ENCODE measurements at regions of chr4 and their contacts with region 1.

Region 1: DNA sequence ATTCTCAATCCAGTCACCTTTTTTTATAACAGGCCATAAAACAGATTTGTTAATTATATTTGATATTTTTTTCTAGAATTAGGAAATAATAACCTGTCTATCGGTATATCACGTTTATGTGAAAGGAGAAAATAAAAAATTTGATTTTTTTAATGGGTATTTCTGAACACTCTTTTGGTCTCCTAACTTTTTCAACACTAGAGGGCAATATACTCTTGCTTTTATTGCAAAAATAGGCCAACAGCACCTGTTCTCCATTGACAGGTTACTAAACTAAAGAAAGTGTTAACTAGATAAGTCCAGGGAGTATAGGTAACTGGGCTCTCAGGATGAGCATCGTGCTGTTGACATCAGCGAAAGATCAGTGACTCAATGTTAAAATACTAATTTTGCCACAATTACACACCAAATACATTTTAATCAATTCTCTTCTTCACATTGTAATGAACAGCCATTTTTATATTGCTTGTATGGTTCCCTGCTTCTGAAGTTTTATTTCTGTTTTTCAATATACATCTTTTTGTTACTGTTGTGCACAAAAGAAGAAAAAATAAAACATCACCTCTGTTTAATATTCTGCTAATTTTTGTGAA is 22.8 kb downstream of the NDST4 start:
- DNase-seq: no peak
- H3K4me3 Mint-ChIP-seq: no peak overlapping the region
- H3K27ac Mint-ChIP-seq: no peak overlapping the region
- H3K4me1 Mint-ChIP-seq: no peaks in the 10 kb centered on the region
- H3K27me3 Mint-ChIP-seq: no peaks in the 10 kb centered on the region

Region 2: GRCh38 chr4:115076691-115077090 is 13.9 kb before region 1 on chr4:
- CTCF ChIA-PET with region 1: no interaction called
- intact Hi-C with region 1: no loop called
- DNase-seq: no peak
- H3K4me3 Mint-ChIP-seq: no peak overlapping the region
- H3K27ac Mint-ChIP-seq: no peak overlapping the region
- H3K4me1 Mint-ChIP-seq: no peaks in the 10 kb centered on the region
- H3K27me3 Mint-ChIP-seq: peaks cover 2% of the 10 kb centered on the region

Region 3: GRCh38 chr4:115113125-115114106 is 22.8 kb after region 1 on chr4 and contains the start of gene NDST4:
- CTCF ChIA-PET with region 1: no interaction called
- intact Hi-C with region 1: no loop called
- DNase-seq: no peak
- H3K4me3 Mint-ChIP-seq: no peak within 1 kb of the TSS
- H3K27ac Mint-ChIP-seq: no peak within 1 kb of the TSS
- H3K4me1 Mint-ChIP-seq: no peaks in the 10 kb centered on the region
- H3K27me3 Mint-ChIP-seq: no peaks in the 10 kb centered on the region
- total RNA-seq, gene NDST4: not detected

Region 4: GRCh38 chr4:115537387-115537786 is 446.8 kb after region 1 on chr4:
- CTCF ChIA-PET with region 1: interaction called, 7 read pairs
- intact Hi-C with region 1: loop called (anchors 1 kb)
- DNase-seq: no peak
- H3K4me3 Mint-ChIP-seq: no peak overlapping the region
- H3K27ac Mint-ChIP-seq: no peak overlapping the region
- H3K4me1 Mint-ChIP-seq: no peaks in the 10 kb centered on the region
- H3K27me3 Mint-ChIP-seq: no peaks in the 10 kb centered on the region

Region 5: DNA sequence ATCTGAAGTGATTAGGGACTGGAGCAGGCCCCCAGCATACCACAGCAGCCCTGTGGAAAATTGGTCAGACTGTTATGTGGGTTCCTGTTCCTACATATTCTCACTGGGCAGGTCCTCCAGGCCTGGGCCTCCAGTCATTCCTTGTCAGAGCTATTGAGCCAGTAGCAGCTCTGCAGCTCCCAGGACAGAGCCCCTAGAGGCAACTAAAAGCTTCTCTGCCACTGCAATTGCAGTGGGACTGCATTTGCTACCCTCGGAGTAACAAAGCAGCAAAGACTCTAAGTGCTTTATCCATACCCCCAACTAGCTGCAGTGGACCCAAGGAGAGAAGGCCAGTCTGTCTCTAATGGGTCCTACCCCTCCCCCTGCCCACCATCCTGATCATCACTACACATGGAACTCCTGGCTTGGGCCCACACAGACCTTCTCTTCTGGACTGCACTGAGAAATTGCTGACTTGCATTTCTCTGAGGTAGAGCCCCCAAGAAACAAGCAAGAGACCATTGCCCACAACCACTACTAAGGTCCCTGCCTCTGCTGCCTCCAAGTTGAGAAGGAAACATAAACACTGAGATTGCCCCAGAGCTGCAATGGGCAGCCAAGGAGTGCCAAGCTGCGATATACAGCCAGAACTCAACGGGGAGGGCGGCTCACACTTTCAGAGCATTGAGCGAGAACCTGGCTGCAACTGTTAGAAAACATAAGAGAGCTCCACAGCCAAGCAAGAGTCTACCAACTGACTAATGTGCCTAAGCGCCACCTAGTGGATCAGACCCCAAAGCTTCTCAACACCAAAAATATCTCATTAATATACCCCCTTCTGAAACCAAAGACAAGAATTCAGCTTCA is 761.6 kb after region 1 on chr4:
- CTCF ChIA-PET with region 1: no interaction called
- intact Hi-C with region 1: loop called (anchors 1 kb)
- DNase-seq: peak; percentile 24
- H3K4me3 Mint-ChIP-seq: no peak overlapping the region
- H3K27ac Mint-ChIP-seq: no peak overlapping the region
- H3K4me1 Mint-ChIP-seq: no peaks in the 10 kb centered on the region
- H3K27me3 Mint-ChIP-seq: no peaks in the 10 kb centered on the region

Measured in activated naive CD4-positive, alpha-beta T cell treated with anti-CD3 and anti-CD28 coated beads for 36 hours (primary cell).